Left cardiac atrium (tissue), 4 donors: ENCODE measurements at regions of chr17 and their contacts with region 1.

Region 1: DNA sequence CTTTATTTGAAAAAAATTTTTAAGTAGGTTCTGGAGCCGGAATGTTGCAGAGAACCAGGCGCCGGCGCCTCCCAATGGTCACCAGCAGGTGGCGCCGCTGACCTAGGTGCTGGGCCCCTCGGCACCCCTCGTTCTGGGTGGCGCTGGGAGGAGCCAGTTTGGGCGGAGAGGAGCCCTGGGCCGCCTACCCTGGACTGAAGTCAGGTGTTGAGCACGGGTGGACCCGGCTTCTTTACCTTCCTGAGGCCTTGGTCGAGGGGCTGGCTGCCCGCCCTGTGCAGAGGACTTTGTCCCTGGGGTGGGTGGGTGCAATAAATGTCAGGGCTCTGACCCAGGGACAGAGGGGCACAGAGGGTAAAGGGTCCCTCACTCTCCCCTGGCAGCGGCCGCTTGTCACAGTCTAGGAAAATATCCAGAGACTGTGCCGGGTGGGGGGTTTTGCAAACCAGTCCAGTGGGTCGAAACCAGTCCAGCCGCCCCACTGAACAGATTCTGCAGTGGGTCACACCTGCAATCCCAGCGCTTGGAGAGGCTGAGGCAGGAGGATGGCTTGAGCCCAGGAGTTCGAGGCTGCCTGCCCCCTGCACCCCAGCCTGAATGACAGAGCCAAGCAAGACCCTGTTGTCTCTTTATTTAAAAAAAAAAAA is 30.1 kb upstream of the TNFRSF13B start:
- DNase-seq: peak; percentile 85
- ATAC-seq: peak; percentile 89 to 91

Region 2: DNA sequence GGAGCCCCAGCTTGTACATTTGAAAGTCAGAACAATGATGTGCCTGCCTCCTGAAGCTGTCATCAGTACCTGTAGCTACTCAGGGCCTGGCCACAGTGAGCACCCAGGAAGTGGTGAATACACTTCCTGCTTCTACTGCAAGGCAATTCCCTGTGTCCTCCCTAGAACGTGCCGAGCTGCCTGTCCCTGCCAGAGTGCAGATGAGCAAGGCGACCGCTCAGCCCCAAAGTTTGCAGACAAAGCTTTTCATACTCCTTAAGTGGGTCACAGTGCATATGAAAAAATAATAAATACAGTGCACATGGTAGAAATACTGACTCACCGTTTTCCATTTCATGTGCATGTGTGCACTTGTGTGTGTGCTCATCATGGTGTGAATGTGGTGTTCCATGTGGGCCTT is 117.5 kb after region 1 on chr17:
- intact Hi-C with region 1: loop called in 1 of 2 experiments (anchors 10 kb)
- DNase-seq: no peak
- ATAC-seq: peak; percentile 20 to 21

Region 3: DNA sequence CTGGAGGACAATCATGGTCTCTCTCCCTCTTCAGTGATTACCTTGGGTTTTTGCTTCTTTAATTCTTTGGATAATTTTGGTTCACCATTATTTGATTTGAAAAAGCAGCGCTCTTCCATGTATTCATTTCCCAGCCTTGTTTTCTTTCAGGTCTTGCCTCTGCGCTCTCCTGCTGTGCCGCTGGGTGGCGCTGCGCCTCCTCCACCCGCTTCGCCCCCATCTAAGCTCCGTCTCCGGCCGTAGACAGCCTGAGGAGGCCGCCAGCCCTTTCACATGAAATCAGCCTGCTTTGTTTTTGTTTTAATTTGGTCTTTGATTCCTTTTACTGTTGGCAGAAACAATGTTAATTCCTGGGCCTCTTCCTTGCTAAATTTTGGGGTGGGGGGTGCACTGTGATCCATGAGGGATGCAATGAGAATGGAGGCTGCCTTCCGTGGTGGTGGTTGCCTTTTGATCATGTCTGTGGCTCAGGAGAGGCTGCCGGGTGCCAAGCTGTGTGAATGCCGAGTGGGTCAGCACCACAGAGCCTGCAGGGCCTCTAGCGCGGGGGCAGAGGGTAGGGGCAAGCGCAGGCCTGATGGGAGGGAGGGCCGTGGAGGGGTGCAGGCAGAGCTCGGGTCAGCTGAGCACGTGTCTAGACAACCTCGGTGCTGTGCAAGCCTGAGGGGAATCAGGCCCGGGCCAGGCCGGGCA is 140.0 kb after region 1 on chr17:
- intact Hi-C with region 1: loop called (anchors 10 kb)
- DNase-seq: no peak
- ATAC-seq: peak in 1 of 2 donors; percentile 61

Region 4: DNA sequence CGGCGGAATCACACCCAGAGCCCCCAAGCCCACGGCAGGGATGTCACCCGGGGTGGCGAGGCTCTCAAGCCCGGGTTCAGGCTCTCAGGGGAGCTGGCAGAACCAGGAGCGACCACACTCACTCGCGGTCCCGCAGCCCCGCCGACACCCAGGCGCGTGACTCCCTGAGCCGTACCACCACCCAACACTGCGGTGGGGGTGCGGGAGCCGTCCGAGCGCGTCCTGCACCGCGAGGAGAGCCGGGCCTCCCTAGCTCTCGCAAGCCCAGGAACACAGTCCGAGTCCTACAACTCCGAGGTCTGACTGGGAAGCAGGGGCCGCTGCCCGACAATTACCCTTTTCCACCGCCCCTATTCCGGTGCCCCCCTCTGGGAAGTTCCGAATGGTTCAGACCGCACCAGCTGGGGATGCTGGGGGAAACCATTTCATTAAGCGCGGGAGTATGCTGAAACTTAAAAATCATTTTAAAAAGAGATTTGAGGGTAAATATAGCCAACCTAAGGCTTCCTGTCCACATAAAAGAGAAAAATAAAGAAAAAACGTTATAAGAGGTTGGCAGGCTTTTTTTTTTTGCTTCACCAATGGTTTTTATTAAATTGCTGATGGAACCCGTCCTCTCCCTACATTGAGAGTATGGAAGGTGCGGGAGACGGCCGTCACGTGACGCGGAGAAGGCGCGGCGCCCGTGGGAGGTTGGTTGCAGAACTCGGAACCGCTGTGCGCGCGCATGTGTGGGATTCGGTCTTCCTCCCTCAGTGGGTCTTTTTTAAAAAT is 235.2 kb after region 1 on chr17 and contains the start of gene FLCN:
- intact Hi-C with region 1: loop called in 1 of 2 experiments (anchors 10 kb)
- DNase-seq: peak; percentile 96
- ATAC-seq: peak; percentile 95 to 97
- total RNA-seq, gene FLCN: 36.6 to 48.4 TPM

Region 5: GRCh38 chr17:17313350-17313991 is 311.5 kb after region 1 on chr17:
- intact Hi-C with region 1: loop called in 1 of 2 experiments (anchors 5 kb)
- DNase-seq: no peak
- ATAC-seq: peak; percentile 48 to 72

Region 6: GRCh38 chr17:17641621-17642409 is 639.8 kb after region 1 on chr17:
- intact Hi-C with region 1: loop called in 1 of 2 experiments (anchors 10 kb)
- DNase-seq: peak; percentile 80
- ATAC-seq: peak; percentile 84 to 89